ENCODE measurements at regions of chr1 and their contacts with region 1.

Region 1: DNA sequence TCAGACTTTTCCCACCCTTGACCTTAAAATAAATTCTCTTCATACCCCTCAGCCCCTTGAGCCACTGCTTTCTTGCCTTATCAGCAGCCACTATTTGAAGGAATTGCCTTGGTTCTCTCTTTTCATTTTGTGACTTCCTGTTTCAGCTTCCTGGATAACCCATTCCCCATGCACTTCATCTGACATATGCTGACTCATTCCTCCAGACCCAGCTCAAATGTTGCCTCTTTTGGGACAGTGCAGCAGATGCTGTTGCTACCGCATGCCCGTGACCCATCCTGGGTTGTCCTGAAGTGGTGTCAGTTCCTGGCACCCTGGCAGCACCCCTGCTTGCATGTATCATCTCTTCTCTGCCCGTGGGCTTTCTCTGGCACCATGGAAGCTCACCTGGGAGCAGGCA is 496.1 kb downstream of the PTPRU start:
- DNase-seq: no peak
- H3K4me3 ChIP-seq: no peak overlapping the region
- H3K27ac ChIP-seq: no peak overlapping the region
- H3K4me1 ChIP-seq: no peaks in the 10 kb centered on the region
- H3K27me3 ChIP-seq: peaks cover 0 to 10% of the 10 kb centered on the region in 2 donors
- CTCF ChIP-seq: no peak

Region 2: GRCh38 chr1:29752141-29752540 is 19.7 kb after region 1 on chr1:
- intact Hi-C with region 1: loop called (anchors 2 kb)
- DNase-seq: no peak
- H3K4me3 ChIP-seq: no peak overlapping the region
- H3K27ac ChIP-seq: no peak overlapping the region
- H3K4me1 ChIP-seq: no peaks in the 10 kb centered on the region
- H3K27me3 ChIP-seq: peaks cover 0 to 18% of the 10 kb centered on the region in 2 donors
- CTCF ChIP-seq: no peak

Region 3: GRCh38 chr1:29893041-29893723 is 160.7 kb after region 1 on chr1:
- intact Hi-C with region 1: no loop called
- DNase-seq: no peak
- H3K4me3 ChIP-seq: no peak overlapping the region
- H3K27ac ChIP-seq: no peak overlapping the region
- H3K4me1 ChIP-seq: no peaks in the 10 kb centered on the region
- H3K27me3 ChIP-seq: peaks cover 0 to 55% of the 10 kb centered on the region in 2 donors
- CTCF ChIP-seq: no peak